ENCODE measurements at regions of chr14 and their contacts with region 1.

Region 1: DNA sequence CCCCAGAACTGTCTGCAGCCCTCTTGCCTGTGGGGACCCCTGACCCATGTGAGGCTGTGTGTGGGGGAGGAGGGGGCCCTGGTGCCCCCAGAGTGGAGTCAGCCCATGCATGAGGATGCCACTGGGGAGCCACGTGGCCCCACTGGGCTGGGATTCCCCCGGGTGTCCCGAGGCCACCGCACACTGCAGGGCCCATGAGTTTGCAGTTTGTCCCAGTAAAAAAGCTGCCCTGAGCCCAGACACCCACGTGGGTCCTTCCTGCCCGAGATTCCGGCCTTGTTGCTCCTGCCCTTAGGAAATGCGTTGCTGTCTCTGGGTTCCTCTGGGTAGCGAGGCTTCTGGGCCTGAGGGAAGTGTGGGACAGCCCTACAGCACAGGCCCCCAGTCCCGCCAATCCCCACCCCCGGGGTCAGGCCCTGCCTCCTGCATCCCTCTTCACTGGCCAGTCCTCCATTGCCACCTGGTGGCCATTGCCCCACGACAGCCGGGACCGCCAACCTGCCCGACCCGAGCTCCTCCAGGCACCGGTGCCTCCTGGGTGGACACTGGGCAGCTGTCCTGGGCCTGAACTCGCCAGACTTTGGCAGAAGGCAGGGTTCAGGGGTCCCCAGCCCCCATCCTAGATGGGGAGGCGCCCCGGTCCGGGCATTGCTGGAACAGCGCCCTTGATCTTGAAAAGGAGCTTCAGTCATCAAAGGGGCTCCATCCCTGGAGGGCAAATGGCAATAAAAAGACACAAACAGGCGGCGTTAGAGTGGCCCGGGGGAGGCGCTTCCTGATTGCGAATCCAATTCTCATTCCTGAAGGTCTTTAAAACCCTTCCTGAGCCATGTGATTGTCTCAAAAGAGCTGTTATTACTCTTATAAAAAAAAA is 15.6 kb upstream of the C14orf180 start:
- DNase-seq: no peak
- H3K4me3 ChIP-seq: no peak overlapping the region
- H3K27ac ChIP-seq: no peak overlapping the region
- H3K4me1 ChIP-seq: no peaks in the 10 kb centered on the region
- H3K27me3 ChIP-seq: no peaks in the 10 kb centered on the region
- CTCF ChIP-seq: peak; percentile 48 to 83 (median 55)

Region 2: GRCh38 chr14:104085030-104085888 is 478.7 kb before region 1 on chr14 and contains the start of gene ASPG:
- intact Hi-C with region 1: loop called (anchors 5 kb)
- DNase-seq: no peak
- H3K4me3 ChIP-seq: peak within 1 kb of the TSS; percentile 17 to 39
- H3K27ac ChIP-seq: no peak within 1 kb of the TSS
- H3K4me1 ChIP-seq: no peaks in the 10 kb centered on the region
- H3K27me3 ChIP-seq: peaks cover 9% of the 10 kb centered on the region
- CTCF ChIP-seq: no peak
- total RNA-seq, gene ASPG: not detected

Region 3: GRCh38 chr14:104137297-104138097 is 426.5 kb before region 1 on chr14:
- intact Hi-C with region 1: loop called (anchors 1 kb)
- DNase-seq: peak in 1 of 2 donors; percentile 66
- H3K4me3 ChIP-seq: peak overlapping the region; percentile 55 to 57
- H3K27ac ChIP-seq: no peak overlapping the region
- H3K4me1 ChIP-seq: peaks cover 11 to 12% of the 10 kb centered on the region in 2 donors
- H3K27me3 ChIP-seq: peaks cover 11% of the 10 kb centered on the region
- CTCF ChIP-seq: peak; percentile 20 to 67 (median 64)

Region 4: GRCh38 chr14:104639889-104640548 is 76.0 kb after region 1 on chr14:
- intact Hi-C with region 1: no loop called
- DNase-seq: no peak
- H3K4me3 ChIP-seq: no peak overlapping the region
- H3K27ac ChIP-seq: no peak overlapping the region
- H3K4me1 ChIP-seq: no peaks in the 10 kb centered on the region
- H3K27me3 ChIP-seq: no peaks in the 10 kb centered on the region
- CTCF ChIP-seq: peak; percentile 82 to 90 (median 85)

Measured in ascending aorta (tissue), 2 donors.